ENCODE measurements at regions of chr19 and their contacts with region 1.

Region 1: DNA sequence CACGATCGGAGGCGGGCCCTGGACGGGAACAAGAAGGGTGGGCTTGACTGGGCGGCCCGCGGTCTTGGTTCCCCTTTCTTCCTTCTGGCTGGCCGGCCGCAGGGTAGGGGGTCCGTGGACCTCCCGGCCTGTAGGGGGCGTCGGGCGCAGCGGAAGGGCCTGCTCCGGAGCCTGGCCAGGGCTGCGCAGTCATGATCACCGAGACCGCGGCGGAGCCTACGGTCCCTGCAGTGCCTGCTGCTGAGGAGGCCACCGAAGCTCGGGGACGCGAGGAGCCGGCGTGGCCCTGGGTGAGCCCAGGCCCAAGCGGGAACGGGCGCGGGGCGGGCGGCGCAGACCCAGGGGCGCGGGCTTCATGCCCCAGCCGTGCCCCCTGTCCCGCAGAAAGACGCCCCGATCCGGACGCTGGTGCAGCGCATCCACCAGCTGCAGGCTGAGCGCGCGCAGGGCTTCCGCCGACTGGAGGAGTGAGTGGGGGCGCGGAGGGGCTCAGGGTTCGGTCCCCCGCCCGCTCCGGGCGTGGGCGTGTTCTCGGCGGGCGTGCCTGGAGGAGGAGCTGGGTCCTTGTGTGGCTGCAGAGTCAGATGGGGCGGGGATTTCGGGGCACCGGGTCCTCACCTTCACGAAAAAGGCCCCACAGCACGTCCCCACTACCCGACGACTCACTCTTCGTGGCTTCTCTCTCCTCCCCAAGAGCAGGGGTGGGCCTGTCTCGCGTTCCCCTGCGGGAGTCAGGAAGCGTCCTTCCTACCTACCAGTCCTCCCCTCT is at the start of gene REX1BD:
- DNase-seq: peak; percentile 79 to 87 (median 86)
- H3K4me3 ChIP-seq: peak within 1 kb of the TSS; percentile 65 to 92 (median 69)
- H3K4me3 Mint-ChIP-seq: peak within 1 kb of the TSS; percentile 78 to 89
- H3K27ac ChIP-seq: peak within 1 kb of the TSS; percentile 56 to 84
- H3K27ac Mint-ChIP-seq: peak within 1 kb of the TSS; percentile 65 to 93 (median 87)
- H3K4me1 ChIP-seq: peaks cover 35 to 52% of the 10 kb centered on the region in 2 donors
- H3K4me1 Mint-ChIP-seq: peaks cover 42% of the 10 kb centered on the region
- H3K27me3 ChIP-seq: peaks cover 0 to 6% of the 10 kb centered on the region in 2 donors
- H3K27me3 Mint-ChIP-seq: peaks cover 3 to 13% (median 8%) of the 10 kb centered on the region in 3 donors
- CTCF ChIP-seq: peak; percentile 93
- polyA plus RNA-seq, gene REX1BD: 83.7 to 141 (median 122) TPM

Region 2: DNA sequence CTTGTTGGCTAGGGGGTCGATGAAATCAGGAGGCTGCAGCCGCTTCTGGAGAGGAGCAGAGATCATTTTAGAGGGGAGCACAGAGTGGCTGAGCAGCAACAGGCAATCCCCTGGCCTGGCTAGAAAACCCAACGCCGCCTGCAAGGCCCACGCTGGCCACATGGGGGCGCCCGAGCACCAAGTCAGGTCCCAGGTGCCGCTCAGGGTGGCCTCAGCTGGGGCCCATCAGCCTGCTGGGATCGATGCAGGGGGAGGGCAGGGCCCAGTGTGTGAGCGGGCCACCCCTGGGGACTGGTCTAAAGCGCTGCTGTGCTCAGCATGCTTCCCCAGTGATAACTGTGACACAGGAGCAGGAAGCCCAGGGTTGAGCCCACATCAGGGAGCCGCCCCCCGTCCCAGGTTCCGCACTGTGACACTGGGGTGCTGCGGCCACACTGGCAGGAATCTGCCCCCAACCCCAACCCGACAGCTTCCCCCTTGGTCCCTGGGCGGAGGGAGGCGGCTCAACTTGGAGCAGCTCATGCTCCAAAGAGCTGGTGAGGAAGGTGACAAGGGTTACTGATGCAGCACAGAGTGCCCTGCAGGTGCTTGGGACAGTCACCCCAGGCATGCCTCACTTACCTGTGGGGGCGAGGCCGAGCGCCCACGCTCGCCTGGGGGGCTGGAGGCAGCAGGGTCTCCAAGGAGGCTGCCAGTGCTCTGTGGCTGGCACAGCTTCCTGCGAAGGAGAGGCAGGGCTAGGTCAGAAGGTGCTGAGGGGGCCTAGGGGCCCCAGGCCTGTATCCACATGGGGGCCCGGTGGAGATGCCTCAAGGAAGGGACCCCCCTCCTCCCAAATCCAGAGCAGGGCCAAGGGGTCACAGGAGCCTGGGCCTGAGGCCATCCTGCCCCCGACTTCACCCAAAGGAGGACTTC is 137.6 kb before region 1 on chr19:
- intact Hi-C with region 1: loop called in 1 of 2 experiments (anchors 10 kb)
- DNase-seq: peak; percentile 63 to 74 (median 72)
- H3K4me3 ChIP-seq: no peak overlapping the region
- H3K4me3 Mint-ChIP-seq: no peak overlapping the region
- H3K27ac ChIP-seq: no peak overlapping the region
- H3K27ac Mint-ChIP-seq: peak overlapping the region in 1 of 7 donors; percentile 73
- H3K4me1 ChIP-seq: no peaks in the 10 kb centered on the region
- H3K4me1 Mint-ChIP-seq: no peaks in the 10 kb centered on the region
- H3K27me3 ChIP-seq: no peaks in the 10 kb centered on the region
- H3K27me3 Mint-ChIP-seq: peaks cover 0 to 6% (median 1%) of the 10 kb centered on the region in 3 donors
- CTCF ChIP-seq: peak; percentile 96

Region 3: GRCh38 chr19:18464646-18465045 is 124.1 kb before region 1 on chr19:
- intact Hi-C with region 1: loop called (anchors 5 to 10 kb)
- DNase-seq: no peak
- H3K4me3 ChIP-seq: no peak overlapping the region
- H3K4me3 Mint-ChIP-seq: no peak overlapping the region
- H3K27ac ChIP-seq: no peak overlapping the region
- H3K27ac Mint-ChIP-seq: peak overlapping the region in 3 of 7 donors; percentile 12 to 70 (median 42)
- H3K4me1 ChIP-seq: peaks cover 0 to 16% of the 10 kb centered on the region in 2 donors
- H3K4me1 Mint-ChIP-seq: peaks cover 25% of the 10 kb centered on the region
- H3K27me3 ChIP-seq: no peaks in the 10 kb centered on the region
- H3K27me3 Mint-ChIP-seq: peaks cover 0 to 3% (median 0%) of the 10 kb centered on the region in 3 donors
- CTCF ChIP-seq: no peak